AG04450 (cell line): ENCODE measurements at regions of chr11 and their contacts with region 1.

Region 1: GRCh38 chr11:36041988-36042611 is 98.2 kb downstream of the LDLRAD3 start:
- DNase-seq: no peak
- H3K4me3 ChIP-seq: no peak overlapping the region
- H3K27ac ChIP-seq: no peak overlapping the region
- H3K27me3 ChIP-seq: no peaks in the 10 kb centered on the region
- CTCF ChIP-seq: peak; percentile 66; the same call in 1 of the 2 replicates

Region 2: DNA sequence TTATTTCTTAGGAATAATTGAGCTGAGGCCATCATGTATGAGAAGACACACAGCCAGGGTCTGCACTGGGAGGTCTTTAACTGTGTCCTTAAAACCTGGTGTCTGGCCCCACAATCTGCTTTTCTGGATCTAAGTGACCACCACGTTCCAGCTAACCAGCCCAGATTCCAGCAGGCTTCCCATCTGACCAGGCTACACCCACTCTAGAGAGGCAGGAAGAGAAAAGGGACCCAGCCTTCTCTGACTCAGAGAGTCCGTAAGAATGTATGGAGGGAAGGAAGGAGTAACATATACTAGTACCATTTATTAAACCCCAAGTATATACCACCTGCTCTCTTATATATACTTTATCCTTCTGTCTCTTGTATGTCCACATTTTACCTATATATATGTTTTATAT is 18.2 kb before region 1 on chr11:
- CTCF ChIA-PET with region 1: interaction called, 12 read pairs
- POLR2A ChIA-PET with region 1: no interaction called
- DNase-seq: no peak
- H3K4me3 ChIP-seq: no peak overlapping the region
- H3K27ac ChIP-seq: no peak overlapping the region
- H3K27me3 ChIP-seq: no peaks in the 10 kb centered on the region
- CTCF ChIP-seq: no peak

Region 3: DNA sequence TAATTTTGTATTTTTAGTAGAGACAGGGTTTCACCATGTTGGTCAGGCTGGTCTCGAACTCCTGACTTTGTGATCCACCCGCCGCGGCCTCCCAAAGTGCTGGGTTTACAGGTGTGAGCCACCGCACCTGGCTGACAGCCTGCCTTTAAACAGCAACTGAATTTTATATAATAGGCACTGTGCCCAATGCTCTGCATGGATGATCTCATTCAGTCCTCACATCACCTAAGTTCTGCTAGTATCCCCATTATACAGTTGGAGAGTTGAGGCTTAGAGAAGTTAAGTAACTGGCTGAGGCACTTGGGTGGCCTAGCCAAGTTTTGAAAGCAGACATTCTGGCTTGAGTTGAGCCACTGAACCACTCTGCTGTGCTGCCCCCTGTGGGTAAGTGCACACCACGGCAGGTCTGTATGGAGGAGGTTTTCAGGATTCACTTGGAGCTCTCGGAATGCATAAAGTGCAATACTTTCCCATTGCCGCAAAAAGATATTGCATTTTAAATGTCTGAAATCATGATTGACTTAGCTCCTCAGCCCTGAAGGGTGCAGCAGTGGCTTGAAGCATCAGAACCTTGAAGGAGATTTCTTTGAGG is 14.2 kb after region 1 on chr11:
- CTCF ChIA-PET with region 1: interaction called, 21 read pairs
- POLR2A ChIA-PET with region 1: no interaction called
- DNase-seq: no peak
- H3K4me3 ChIP-seq: no peak overlapping the region
- H3K27ac ChIP-seq: no peak overlapping the region
- H3K27me3 ChIP-seq: no peaks in the 10 kb centered on the region
- CTCF ChIP-seq: peak; percentile 52

Region 4: GRCh38 chr11:36073411-36074203 is 31.5 kb after region 1 on chr11:
- CTCF ChIA-PET with region 1: interaction called, 12 read pairs
- POLR2A ChIA-PET with region 1: no interaction called
- DNase-seq: peak; percentile 72
- H3K4me3 ChIP-seq: no peak overlapping the region
- H3K27ac ChIP-seq: peak overlapping the region; percentile 54
- H3K27me3 ChIP-seq: no peaks in the 10 kb centered on the region
- CTCF ChIP-seq: no peak

Region 5: GRCh38 chr11:36249246-36249645 is 207.1 kb after region 1 on chr11:
- CTCF ChIA-PET with region 1: interaction called, 10 read pairs
- POLR2A ChIA-PET with region 1: no interaction called
- DNase-seq: peak; percentile 77
- H3K4me3 ChIP-seq: no peak overlapping the region
- H3K27ac ChIP-seq: no peak overlapping the region
- H3K27me3 ChIP-seq: peaks cover 14% of the 10 kb centered on the region
- CTCF ChIP-seq: no peak

Region 6: GRCh38 chr11:36258730-36259360 is 216.7 kb after region 1 on chr11:
- CTCF ChIA-PET with region 1: interaction called, 38 read pairs
- POLR2A ChIA-PET with region 1: interaction called, 4 read pairs
- DNase-seq: peak; percentile 45
- H3K4me3 ChIP-seq: no peak overlapping the region
- H3K27ac ChIP-seq: no peak overlapping the region
- H3K27me3 ChIP-seq: peaks cover 14% of the 10 kb centered on the region
- CTCF ChIP-seq: peak; percentile 81